MCF 10A (cell line): ENCODE measurements at regions of chr21 and their contacts with region 1.

Region 1: DNA sequence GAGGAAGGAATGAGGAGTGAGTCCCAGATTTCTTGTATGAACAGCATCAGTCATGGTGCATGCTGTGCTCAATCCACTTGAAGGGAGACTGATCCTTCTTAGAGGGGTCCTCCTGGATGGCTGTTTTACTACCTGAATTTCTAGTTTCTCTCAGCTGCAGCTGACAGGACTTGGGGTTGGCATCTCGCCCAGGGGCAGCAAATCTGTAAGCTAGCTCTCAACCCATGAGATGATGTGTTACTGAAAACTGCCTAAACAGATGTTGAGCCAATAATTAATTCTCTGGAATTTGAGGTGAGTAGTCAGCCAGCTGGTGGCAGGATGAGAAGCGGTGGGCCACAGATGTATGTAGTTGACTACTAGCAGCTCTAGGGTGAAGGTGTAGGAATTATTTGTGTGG is 19.6 kb downstream of the BACH1 start:
- DNase-seq: no peak
- H3K4me3 Mint-ChIP-seq: no peak overlapping the region
- H3K27ac Mint-ChIP-seq: no peak overlapping the region
- H3K4me1 Mint-ChIP-seq: peaks cover 54% of the 10 kb centered on the region
- H3K27me3 Mint-ChIP-seq: no peaks in the 10 kb centered on the region
- CTCF ChIP-seq: no peak

Region 2: DNA sequence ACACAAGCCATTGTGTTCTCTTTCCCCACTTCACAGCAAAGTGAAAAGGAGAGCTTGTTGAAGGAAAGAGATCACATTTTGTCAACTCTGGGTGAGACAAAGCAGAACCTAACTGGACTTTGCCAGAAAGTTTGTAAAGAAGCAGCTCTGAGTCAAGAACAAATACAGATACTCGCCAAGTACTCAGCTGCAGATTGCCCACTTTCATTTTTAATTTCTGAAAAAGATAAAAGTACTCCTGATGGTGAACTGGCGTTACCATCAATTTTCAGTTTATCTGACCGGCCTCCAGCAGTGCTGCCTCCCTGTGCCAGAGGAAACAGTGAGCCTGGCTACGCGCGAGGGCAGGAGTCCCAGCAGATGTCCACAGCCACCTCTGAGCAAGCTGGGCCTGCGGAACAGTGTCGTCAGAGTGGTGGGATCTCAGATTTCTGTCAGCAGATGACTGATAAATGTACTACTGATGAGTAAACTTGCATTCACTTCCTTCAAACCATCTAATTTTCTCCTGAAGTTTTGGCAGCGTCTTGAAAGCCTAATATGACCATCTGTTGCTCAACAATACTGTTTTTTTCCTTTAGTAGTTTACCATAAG is 24.1 kb after region 1 on chr21:
- CTCF ChIA-PET with region 1: interaction called, 4 read pairs
- POLR2A ChIA-PET with region 1: interaction called, 15 read pairs
- intact Hi-C with region 1: no loop called
- DNase-seq: peak; percentile 94
- H3K4me3 Mint-ChIP-seq: peak overlapping the region; percentile 60
- H3K27ac Mint-ChIP-seq: peak overlapping the region; percentile 84
- H3K4me1 Mint-ChIP-seq: peaks cover 34% of the 10 kb centered on the region
- H3K27me3 Mint-ChIP-seq: no peaks in the 10 kb centered on the region
- CTCF ChIP-seq: no peak

Region 3: DNA sequence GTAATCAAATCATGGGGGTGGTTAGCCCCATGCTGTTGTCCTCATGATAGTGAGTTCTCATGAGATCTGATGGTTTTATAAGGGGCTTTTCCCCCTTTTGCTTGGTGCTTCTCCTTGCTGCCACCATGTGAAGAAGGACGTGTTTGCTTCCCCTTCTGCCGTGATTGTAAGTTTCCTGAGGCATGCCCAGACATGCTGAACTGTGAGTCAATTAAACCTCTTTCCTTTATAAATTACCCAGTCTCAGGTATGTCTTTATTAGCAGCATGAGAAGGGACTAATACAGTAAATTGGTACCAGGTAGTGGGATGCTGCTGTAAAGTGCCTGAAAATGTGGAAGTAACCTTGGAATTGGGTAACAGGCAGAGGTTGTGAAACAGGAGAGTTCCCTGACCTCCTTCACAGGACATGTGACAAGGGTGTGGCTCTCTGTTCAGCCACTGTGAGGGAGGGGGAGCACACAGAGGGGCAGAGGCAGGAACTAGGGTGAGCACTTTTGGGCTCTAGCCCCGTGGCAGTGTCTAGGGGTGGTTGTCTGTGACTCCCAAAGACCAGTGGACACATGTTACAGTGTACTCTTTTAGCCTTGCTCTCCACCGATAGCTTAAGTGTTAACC is 85.7 kb after region 1 on chr21:
- CTCF ChIA-PET with region 1: no interaction called
- POLR2A ChIA-PET with region 1: no interaction called
- intact Hi-C with region 1: no loop called
- DNase-seq: peak; percentile 42
- H3K4me3 Mint-ChIP-seq: peak overlapping the region; percentile 21
- H3K27ac Mint-ChIP-seq: peak overlapping the region; percentile 97
- H3K4me1 Mint-ChIP-seq: peaks cover 13% of the 10 kb centered on the region
- H3K27me3 Mint-ChIP-seq: no peaks in the 10 kb centered on the region
- CTCF ChIP-seq: no peak

Region 4: GRCh38 chr21:29647353-29647781 is 329.0 kb after region 1 on chr21:
- CTCF ChIA-PET with region 1: no interaction called
- POLR2A ChIA-PET with region 1: no interaction called
- intact Hi-C with region 1: no loop called
- DNase-seq: no peak
- H3K4me3 Mint-ChIP-seq: no peak overlapping the region
- H3K27ac Mint-ChIP-seq: no peak overlapping the region
- H3K4me1 Mint-ChIP-seq: no peaks in the 10 kb centered on the region
- H3K27me3 Mint-ChIP-seq: no peaks in the 10 kb centered on the region
- CTCF ChIP-seq: no peak